CD8-positive, alpha-beta T cell (primary cell): ENCODE measurements at regions of chr2 and their contacts with region 1.

Region 1: DNA sequence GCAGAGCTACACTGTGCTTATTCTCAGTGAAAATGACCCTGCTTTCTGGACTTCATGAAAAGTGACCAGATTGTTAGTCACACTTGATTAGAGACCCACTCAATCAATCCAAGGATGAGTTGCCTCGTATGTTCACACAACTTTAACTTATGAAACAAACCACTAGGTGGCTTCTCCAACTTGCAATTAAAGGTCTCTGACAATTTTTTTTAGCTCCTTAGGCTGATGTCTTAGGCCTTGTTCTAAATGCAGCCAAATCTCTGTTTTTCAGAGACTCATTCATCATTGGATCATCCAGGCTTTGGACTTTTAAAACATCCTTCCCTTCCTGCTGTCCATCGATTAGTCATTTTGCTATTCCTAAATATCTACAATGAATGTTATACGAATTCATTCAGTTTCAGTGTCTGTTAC is 63.4 kb downstream of the MREG start:
- DNase-seq: peak in 2 of 9 experiments; percentile 41 to 58
- ATAC-seq: peak; percentile 52
- H3K4me3 ChIP-seq: no peak overlapping the region
- H3K4me3 Mint-ChIP-seq: no peak overlapping the region
- H3K27ac ChIP-seq: no peak overlapping the region
- H3K27ac Mint-ChIP-seq: no peak overlapping the region
- H3K4me1 ChIP-seq: no peaks in the 10 kb centered on the region
- H3K4me1 Mint-ChIP-seq: no peaks in the 10 kb centered on the region
- H3K27me3 ChIP-seq: no peaks in the 10 kb centered on the region
- H3K27me3 Mint-ChIP-seq: no peaks in the 10 kb centered on the region
- CTCF ChIP-seq: peak; percentile 48

Region 2: GRCh38 chr2:214038186-214038585 is 1911.8 kb before region 1 on chr2:
- CTCF ChIA-PET with region 1: no interaction called
- POLR2A ChIA-PET with region 1: no interaction called
- intact Hi-C with region 1: no loop called
- DNase-seq: no peak
- ATAC-seq: no peak
- H3K4me3 ChIP-seq: no peak overlapping the region
- H3K4me3 Mint-ChIP-seq: no peak overlapping the region
- H3K27ac ChIP-seq: no peak overlapping the region
- H3K27ac Mint-ChIP-seq: no peak overlapping the region
- H3K4me1 ChIP-seq: no peaks in the 10 kb centered on the region
- H3K4me1 Mint-ChIP-seq: no peaks in the 10 kb centered on the region
- H3K27me3 ChIP-seq: no peaks in the 10 kb centered on the region
- H3K27me3 Mint-ChIP-seq: no peaks in the 10 kb centered on the region
- CTCF ChIP-seq: no peak

Region 3: DNA sequence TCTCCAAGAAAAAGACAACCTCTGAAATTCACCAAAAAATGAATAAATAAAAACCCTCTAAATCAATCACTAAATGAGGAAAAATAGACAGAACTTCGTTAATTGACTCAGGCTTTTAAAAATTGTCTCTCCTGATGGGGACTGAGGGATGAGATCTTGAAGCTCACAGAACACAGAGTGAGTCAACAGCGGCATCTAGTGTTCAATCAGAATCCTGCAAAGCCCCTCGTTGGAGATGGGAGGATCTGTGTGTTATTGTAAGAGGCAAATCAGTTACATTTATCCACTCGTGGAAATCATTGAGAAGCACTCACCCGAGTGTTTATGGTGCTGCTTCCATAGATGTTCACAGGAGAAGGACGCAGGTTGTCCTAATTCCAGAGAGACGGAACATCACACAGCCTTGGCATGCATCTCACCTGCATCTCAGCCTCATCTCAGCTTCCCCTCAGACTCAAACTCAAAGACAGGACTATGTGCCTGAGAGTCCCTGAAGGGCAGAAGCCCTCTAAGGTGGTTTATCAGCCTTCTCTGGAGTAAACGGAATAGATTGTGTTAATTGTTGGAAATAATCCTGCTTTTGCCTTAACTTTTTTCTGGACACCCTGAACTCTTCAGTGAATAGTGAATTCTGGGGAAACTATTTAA is 18.6 kb before region 1 on chr2:
- CTCF ChIA-PET with region 1: interaction called, 12 read pairs
- POLR2A ChIA-PET with region 1: no interaction called
- intact Hi-C with region 1: no loop called
- DNase-seq: peak; percentile 11 to 63 (median 39)
- ATAC-seq: peak; percentile 64
- H3K4me3 ChIP-seq: no peak overlapping the region
- H3K4me3 Mint-ChIP-seq: no peak overlapping the region
- H3K27ac ChIP-seq: no peak overlapping the region
- H3K27ac Mint-ChIP-seq: no peak overlapping the region
- H3K4me1 ChIP-seq: no peaks in the 10 kb centered on the region
- H3K4me1 Mint-ChIP-seq: no peaks in the 10 kb centered on the region
- H3K27me3 ChIP-seq: peaks cover 0 to 4% of the 10 kb centered on the region in 2 experiments
- H3K27me3 Mint-ChIP-seq: no peaks in the 10 kb centered on the region
- CTCF ChIP-seq: peak; percentile 94

Region 4: DNA sequence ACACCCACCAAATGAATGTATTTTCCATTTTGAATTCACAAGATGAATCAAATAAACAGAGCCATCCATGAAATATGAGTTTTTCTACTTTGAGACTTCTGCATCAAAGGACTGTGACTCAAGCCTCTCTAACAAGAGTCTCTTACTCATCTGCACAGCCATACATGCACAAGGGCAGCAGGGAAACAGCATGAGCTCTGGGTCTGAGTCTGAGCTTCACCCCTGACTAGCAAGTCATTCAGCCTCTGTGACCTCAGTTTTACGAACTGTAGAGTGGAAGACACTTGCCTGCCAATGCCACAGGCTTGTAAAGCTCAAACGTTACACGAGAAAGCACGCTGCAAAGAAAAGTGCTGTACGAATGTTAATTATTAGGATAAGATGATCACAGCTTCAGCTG is 20.4 kb after region 1 on chr2:
- CTCF ChIA-PET with region 1: no interaction called
- POLR2A ChIA-PET with region 1: no interaction called
- intact Hi-C with region 1: no loop called
- DNase-seq: no peak
- ATAC-seq: no peak
- H3K4me3 ChIP-seq: no peak overlapping the region
- H3K4me3 Mint-ChIP-seq: no peak overlapping the region
- H3K27ac ChIP-seq: no peak overlapping the region
- H3K27ac Mint-ChIP-seq: no peak overlapping the region
- H3K4me1 ChIP-seq: no peaks in the 10 kb centered on the region
- H3K4me1 Mint-ChIP-seq: peaks cover 11% of the 10 kb centered on the region
- H3K27me3 ChIP-seq: no peaks in the 10 kb centered on the region
- H3K27me3 Mint-ChIP-seq: no peaks in the 10 kb centered on the region
- CTCF ChIP-seq: no peak

Region 5: DNA sequence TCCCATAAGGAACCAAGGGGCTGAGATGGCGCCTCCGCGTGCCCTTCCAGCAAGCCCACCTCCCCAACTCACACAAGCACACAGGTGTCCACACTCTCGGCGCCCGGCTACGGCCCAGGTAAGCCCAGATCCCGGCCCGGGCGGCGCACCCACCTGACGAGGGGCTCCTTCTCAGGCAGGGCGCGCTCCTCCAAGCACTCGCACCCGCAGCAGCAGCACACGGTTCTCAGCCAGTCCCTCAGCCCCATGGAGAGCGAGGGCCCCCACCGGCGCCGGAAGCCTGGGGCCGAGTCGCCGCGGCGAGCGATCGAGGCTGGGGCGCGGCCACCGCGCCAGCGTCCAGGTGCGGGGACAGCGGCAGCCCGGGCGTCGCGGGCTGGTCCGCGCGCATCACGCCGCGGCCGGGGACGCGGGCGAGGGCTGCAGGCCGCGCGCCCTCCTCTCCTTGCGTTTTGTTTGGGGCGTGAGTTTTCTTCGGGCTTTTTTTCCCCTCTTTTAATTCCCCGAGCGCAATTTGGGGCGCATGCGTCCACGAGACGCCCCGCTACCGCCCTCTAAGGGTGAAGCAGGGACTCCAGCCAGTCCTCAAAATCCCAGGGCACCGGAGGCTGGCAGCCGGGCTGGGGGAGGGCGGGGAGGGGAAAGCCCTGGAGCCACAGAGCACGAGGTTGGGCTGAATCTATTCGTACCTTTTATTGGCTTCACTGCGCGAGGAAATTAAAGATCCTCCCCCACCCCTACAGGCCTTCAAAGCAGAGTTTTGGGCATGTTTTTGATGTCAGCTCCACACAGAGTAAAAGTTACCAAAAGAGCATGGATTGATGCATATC is 63.3 kb after region 1 on chr2 and contains the start of gene MREG:
- CTCF ChIA-PET with region 1: interaction called, 31 read pairs
- POLR2A ChIA-PET with region 1: no interaction called
- intact Hi-C with region 1: loop called in 1 of 2 experiments (anchors 2 kb)
- DNase-seq: peak; percentile 66 to 92 (median 83)
- ATAC-seq: peak; percentile 80
- H3K4me3 ChIP-seq: peak within 1 kb of the TSS; percentile 44 to 80
- H3K4me3 Mint-ChIP-seq: peak within 1 kb of the TSS; percentile 85
- H3K27ac ChIP-seq: peak within 1 kb of the TSS; percentile 1 to 3
- H3K27ac Mint-ChIP-seq: peak within 1 kb of the TSS; percentile 61
- H3K4me1 ChIP-seq: peaks cover 36% of the 10 kb centered on the region
- H3K4me1 Mint-ChIP-seq: peaks cover 65% of the 10 kb centered on the region
- H3K27me3 ChIP-seq: no peaks in the 10 kb centered on the region
- H3K27me3 Mint-ChIP-seq: no peaks in the 10 kb centered on the region
- CTCF ChIP-seq: peak; percentile 67
- total RNA-seq, gene MREG: 3.2 to 3.6 TPM

Region 6: DNA sequence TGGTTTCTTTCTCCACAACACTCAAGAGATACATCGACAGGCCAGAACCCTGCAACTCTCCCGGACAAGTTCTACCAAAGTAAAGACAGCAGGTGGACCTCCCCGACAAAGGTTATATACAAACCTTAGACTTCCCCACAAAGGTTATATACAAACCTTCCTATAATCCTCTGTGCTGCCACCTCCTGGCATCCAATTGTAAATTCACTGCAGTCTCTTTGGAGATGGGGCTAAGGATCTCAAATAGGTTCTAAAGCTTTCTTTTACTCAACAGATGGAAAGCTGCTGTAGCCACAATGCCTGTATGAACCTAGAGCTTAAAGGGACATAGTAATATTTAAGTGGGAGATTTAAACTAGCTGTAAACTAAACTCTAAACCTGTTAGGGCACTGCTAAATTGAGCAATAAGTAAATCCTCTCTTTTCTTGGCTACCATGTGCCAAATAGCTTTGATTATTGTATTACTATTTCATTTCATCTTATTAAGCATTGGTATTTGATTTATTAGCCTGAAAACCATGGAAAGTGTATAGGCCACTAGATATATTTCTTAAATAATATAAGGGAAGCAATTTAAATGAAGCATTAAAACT is 73.2 kb after region 1 on chr2:
- CTCF ChIA-PET with region 1: interaction called, 35 read pairs
- POLR2A ChIA-PET with region 1: no interaction called
- intact Hi-C with region 1: loop called (anchors 1 kb)
- DNase-seq: peak in 7 of 9 experiments; percentile 18 to 69 (median 46)
- ATAC-seq: peak; percentile 83
- H3K4me3 ChIP-seq: no peak overlapping the region
- H3K4me3 Mint-ChIP-seq: no peak overlapping the region
- H3K27ac ChIP-seq: no peak overlapping the region
- H3K27ac Mint-ChIP-seq: no peak overlapping the region
- H3K4me1 ChIP-seq: no peaks in the 10 kb centered on the region
- H3K4me1 Mint-ChIP-seq: peaks cover 11% of the 10 kb centered on the region
- H3K27me3 ChIP-seq: no peaks in the 10 kb centered on the region
- H3K27me3 Mint-ChIP-seq: no peaks in the 10 kb centered on the region
- CTCF ChIP-seq: peak; percentile 65

Region 7: GRCh38 chr2:216139884-216140283 is 189.9 kb after region 1 on chr2:
- CTCF ChIA-PET with region 1: no interaction called
- POLR2A ChIA-PET with region 1: no interaction called
- intact Hi-C with region 1: loop called (anchors 5 to 10 kb)
- DNase-seq: peak in 6 of 9 experiments; percentile 3 to 68 (median 42)
- ATAC-seq: peak; percentile 56
- H3K4me3 ChIP-seq: no peak overlapping the region
- H3K4me3 Mint-ChIP-seq: no peak overlapping the region
- H3K27ac ChIP-seq: no peak overlapping the region
- H3K27ac Mint-ChIP-seq: peak overlapping the region; percentile 23
- H3K4me1 ChIP-seq: no peaks in the 10 kb centered on the region
- H3K4me1 Mint-ChIP-seq: peaks cover 23% of the 10 kb centered on the region
- H3K27me3 ChIP-seq: no peaks in the 10 kb centered on the region
- H3K27me3 Mint-ChIP-seq: no peaks in the 10 kb centered on the region
- CTCF ChIP-seq: peak; percentile 59